CD4-positive, alpha-beta T cell (primary cell): ENCODE measurements at regions of chr5 and their contacts with region 1.

Region 1: GRCh38 chr5:54243473-54244080 is 66.8 kb downstream of the ARL15 start:
- DNase-seq: peak in 11 of 14 experiments; percentile 1 to 62 (median 12)
- ATAC-seq: no peak
- H3K4me3 ChIP-seq: no peak overlapping the region
- H3K4me3 Mint-ChIP-seq: no peak overlapping the region
- H3K27ac ChIP-seq: no peak overlapping the region
- H3K27ac Mint-ChIP-seq: no peak overlapping the region
- H3K4me1 ChIP-seq: no peaks in the 10 kb centered on the region
- H3K4me1 Mint-ChIP-seq: peaks cover 15% of the 10 kb centered on the region
- H3K27me3 ChIP-seq: no peaks in the 10 kb centered on the region
- H3K27me3 Mint-ChIP-seq: no peaks in the 10 kb centered on the region
- CTCF ChIP-seq: peak; percentile 68

Region 2: GRCh38 chr5:54217826-54218503 is 25.6 kb before region 1 on chr5:
- CTCF ChIA-PET with region 1: no interaction called
- POLR2A ChIA-PET with region 1: no interaction called
- intact Hi-C with region 1: no loop called
- DNase-seq: peak in 4 of 14 experiments; percentile 10 to 55 (median 50)
- ATAC-seq: no peak
- H3K4me3 ChIP-seq: no peak overlapping the region
- H3K4me3 Mint-ChIP-seq: no peak overlapping the region
- H3K27ac ChIP-seq: no peak overlapping the region
- H3K27ac Mint-ChIP-seq: no peak overlapping the region
- H3K4me1 ChIP-seq: no peaks in the 10 kb centered on the region
- H3K4me1 Mint-ChIP-seq: peaks cover 16% of the 10 kb centered on the region
- H3K27me3 ChIP-seq: no peaks in the 10 kb centered on the region
- H3K27me3 Mint-ChIP-seq: no peaks in the 10 kb centered on the region
- CTCF ChIP-seq: peak; percentile 69

Region 3: GRCh38 chr5:54415896-54416601 is 172.5 kb after region 1 on chr5:
- CTCF ChIA-PET with region 1: interaction called, 7 read pairs
- POLR2A ChIA-PET with region 1: interaction called, 3 read pairs
- intact Hi-C with region 1: loop called (anchors 1 kb)
- DNase-seq: no peak
- ATAC-seq: no peak
- H3K4me3 ChIP-seq: no peak overlapping the region
- H3K4me3 Mint-ChIP-seq: no peak overlapping the region
- H3K27ac ChIP-seq: no peak overlapping the region
- H3K27ac Mint-ChIP-seq: no peak overlapping the region
- H3K4me1 ChIP-seq: no peaks in the 10 kb centered on the region
- H3K4me1 Mint-ChIP-seq: no peaks in the 10 kb centered on the region
- H3K27me3 ChIP-seq: no peaks in the 10 kb centered on the region
- H3K27me3 Mint-ChIP-seq: peaks cover 6% of the 10 kb centered on the region
- CTCF ChIP-seq: no peak

Region 4: DNA sequence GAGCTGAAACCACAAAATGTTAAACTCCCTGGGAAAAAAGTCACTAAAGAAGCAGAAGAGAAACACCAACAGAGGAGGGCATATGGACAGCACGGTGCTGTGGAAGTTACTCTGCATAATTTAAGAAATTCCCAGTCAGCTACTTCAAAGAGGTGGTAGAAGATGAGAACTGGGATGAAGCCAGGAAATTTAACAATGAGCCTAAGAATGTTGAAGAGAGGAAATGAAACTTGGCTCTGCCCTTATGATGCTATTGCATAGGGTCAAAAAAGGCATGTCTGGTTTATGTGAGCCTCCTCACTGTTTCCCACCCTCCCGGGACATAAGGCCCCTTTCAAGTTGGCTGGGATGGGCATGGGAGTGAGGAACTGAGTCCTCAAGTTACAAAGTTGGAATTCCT is 248.6 kb after region 1 on chr5:
- CTCF ChIA-PET with region 1: interaction called, 3 read pairs
- POLR2A ChIA-PET with region 1: no interaction called
- intact Hi-C with region 1: loop called in 1 of 2 experiments (anchors 2 kb)
- DNase-seq: no peak
- ATAC-seq: no peak
- H3K4me3 ChIP-seq: no peak overlapping the region
- H3K4me3 Mint-ChIP-seq: no peak overlapping the region
- H3K27ac ChIP-seq: no peak overlapping the region
- H3K27ac Mint-ChIP-seq: no peak overlapping the region
- H3K4me1 ChIP-seq: no peaks in the 10 kb centered on the region
- H3K4me1 Mint-ChIP-seq: no peaks in the 10 kb centered on the region
- H3K27me3 ChIP-seq: no peaks in the 10 kb centered on the region
- H3K27me3 Mint-ChIP-seq: peaks cover 14% of the 10 kb centered on the region
- CTCF ChIP-seq: no peak

Region 5: GRCh38 chr5:54867310-54867944 is 623.9 kb after region 1 on chr5:
- CTCF ChIA-PET with region 1: interaction called, 3 read pairs
- POLR2A ChIA-PET with region 1: no interaction called
- intact Hi-C with region 1: loop called (anchors 1 to 5 kb)
- DNase-seq: peak in 3 of 14 experiments; percentile 72 to 74 (median 73)
- ATAC-seq: peak; percentile 74
- H3K4me3 ChIP-seq: no peak overlapping the region
- H3K4me3 Mint-ChIP-seq: peak overlapping the region; percentile 6
- H3K27ac ChIP-seq: no peak overlapping the region
- H3K27ac Mint-ChIP-seq: no peak overlapping the region
- H3K4me1 ChIP-seq: peaks cover 4% of the 10 kb centered on the region
- H3K4me1 Mint-ChIP-seq: peaks cover 10% of the 10 kb centered on the region
- H3K27me3 ChIP-seq: no peaks in the 10 kb centered on the region
- H3K27me3 Mint-ChIP-seq: peaks cover 46% of the 10 kb centered on the region
- CTCF ChIP-seq: peak; percentile 86